Endothelial cell of umbilical vein (primary cell): ENCODE measurements at regions of chr16 and their contacts with region 1.

Region 1: GRCh38 chr16:58345574-58346354 is 46.5 kb upstream of the GINS3 start:
- DNase-seq: peak; percentile 34
- H3K4me3 ChIP-seq: no peak overlapping the region
- H3K27ac ChIP-seq: no peak overlapping the region
- H3K4me1 ChIP-seq: no peaks in the 10 kb centered on the region
- H3K27me3 ChIP-seq: peaks cover 0 to 3% of the 10 kb centered on the region in 2 experiments
- CTCF ChIP-seq: peak in 1 of 2 donors; percentile 16
- POLR2A ChIP-seq: no peak

Region 2: DNA sequence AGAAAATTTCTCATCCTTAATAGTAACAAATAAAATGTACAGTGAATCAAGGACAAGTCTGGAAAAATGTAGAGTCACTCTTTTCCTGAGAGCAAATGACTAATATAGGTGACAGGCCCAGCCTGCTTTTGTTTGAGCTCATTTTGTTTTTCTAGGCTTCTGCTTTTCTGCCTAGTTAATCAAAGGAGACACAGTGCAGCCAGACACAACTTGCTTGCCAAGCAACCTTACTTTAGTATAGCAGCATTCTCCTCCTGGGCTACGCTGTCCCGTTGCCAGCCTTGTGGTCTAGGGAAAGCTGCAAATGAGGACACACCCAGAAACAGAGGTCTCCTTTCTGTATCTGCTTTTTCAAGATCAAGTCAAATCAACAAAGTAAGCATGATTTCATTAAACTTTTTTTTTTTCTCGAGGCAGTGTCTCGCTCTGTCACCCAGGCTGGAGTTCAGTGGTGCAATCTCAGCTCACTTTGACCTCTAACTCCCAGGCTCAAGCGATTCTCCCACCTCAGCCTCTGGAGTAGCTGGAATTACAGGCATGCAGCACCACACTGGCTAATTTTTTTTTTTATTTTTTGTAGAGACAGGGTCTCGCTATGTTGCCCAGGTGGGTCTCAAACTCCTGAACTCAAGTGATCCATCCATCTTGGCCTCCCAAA is 63.7 kb after region 1 on chr16:
- CTCF ChIA-PET with region 1: no interaction called
- POLR2A ChIA-PET with region 1: no interaction called
- dilution Hi-C with region 1: no loop called
- intact Hi-C with region 1: loop called (anchors 1 kb)
- DNase-seq: peak; percentile 90
- H3K4me3 ChIP-seq: no peak overlapping the region
- H3K27ac ChIP-seq: peak overlapping the region; percentile 79
- H3K4me1 ChIP-seq: peaks cover 15% of the 10 kb centered on the region
- H3K27me3 ChIP-seq: no peaks in the 10 kb centered on the region
- CTCF ChIP-seq: no peak
- POLR2A ChIP-seq: no peak